ENCODE measurements at regions of chr19 and their contacts with region 1.

Region 1: GRCh38 chr19:40777937-40778705 is at the start of gene RAB4B:
- DNase-seq: peak; percentile 100
- H3K4me3 Mint-ChIP-seq: peak within 1 kb of the TSS; percentile 99
- H3K27ac Mint-ChIP-seq: peak within 1 kb of the TSS; percentile 100
- H3K4me1 Mint-ChIP-seq: peaks cover 35% of the 10 kb centered on the region
- H3K27me3 Mint-ChIP-seq: no peaks in the 10 kb centered on the region

Region 2: DNA sequence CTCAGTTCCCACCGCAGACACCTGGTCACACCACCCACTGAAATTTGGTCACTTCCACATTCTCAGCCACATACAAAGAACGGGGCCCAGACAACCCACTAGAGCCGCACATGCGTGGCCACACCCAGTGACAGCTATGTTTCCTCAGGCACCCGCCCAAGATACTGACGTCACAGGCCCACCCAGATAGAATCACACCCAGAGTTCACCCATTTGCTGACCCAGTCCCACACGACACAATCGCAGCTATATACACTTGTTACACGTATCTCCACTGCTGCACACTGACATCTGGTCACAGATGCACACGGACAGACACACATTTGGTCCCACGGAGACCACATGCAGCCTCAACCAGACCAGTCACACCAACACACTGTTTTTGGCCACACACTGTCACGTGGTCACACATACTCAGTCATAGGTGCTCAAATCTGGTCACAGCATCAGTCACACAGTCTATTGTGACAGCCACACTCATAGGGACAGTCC is 90.5 kb before region 1 on chr19:
- CTCF ChIA-PET with region 1: no interaction called
- DNase-seq: no peak
- H3K4me3 Mint-ChIP-seq: no peak overlapping the region
- H3K27ac Mint-ChIP-seq: no peak overlapping the region
- H3K4me1 Mint-ChIP-seq: peaks cover 3% of the 10 kb centered on the region
- H3K27me3 Mint-ChIP-seq: no peaks in the 10 kb centered on the region

Region 3: DNA sequence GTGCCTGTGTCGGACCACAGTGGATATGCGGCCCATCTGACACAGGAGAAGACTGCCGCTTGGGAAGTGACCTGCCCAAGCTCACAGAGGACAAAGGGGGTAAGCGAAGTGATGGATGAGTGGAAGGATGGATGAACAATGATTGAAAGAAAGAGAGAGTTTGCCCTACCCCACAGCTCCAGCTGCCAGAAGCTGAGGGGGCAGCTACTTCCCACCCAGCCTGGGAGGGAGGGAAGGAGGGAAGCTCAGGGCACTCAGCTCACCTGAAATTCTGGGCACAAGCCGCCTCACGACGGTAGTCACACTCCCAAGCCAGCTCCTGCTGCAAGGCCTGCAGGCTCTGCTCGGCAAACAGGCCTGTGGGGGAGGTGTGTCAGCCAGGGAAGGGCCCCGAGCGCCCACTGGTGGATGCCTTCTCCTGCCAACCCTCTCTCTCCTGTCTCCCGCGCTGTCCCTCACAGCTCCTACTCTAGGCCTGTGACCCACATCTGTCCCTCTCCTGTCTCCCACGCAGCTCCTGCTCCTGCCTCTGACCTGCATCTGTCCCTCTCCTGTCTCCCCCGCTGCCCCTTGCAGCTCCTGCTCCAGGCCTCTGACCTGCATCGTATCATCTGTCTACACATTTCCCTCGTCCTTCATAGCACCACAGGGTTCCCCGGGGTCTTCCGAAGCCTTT is 75.6 kb before region 1 on chr19:
- CTCF ChIA-PET with region 1: no interaction called
- DNase-seq: no peak
- H3K4me3 Mint-ChIP-seq: no peak overlapping the region
- H3K27ac Mint-ChIP-seq: no peak overlapping the region
- H3K4me1 Mint-ChIP-seq: no peaks in the 10 kb centered on the region
- H3K27me3 Mint-ChIP-seq: no peaks in the 10 kb centered on the region

Region 4: DNA sequence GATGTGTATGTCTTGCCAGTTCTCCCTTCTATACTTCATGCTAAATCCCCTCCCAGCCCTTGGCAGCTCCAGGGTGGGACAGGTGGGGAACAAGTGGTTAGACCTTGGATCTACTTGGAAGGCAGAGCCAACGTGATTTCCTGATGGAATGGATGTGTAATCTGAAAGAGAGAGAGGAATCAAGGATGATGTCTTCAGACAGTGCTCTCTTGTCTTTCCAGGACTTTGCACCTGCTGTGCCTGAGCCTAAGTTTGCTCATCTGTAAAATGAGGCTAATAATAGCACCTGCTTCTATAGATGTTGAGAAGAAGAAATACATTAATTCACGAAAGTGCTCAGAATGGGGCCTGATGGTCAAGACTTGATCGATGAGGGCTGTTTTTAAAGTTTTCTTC is 13.9 kb after region 1 on chr19:
- CTCF ChIA-PET with region 1: interaction called, 24 read pairs
- DNase-seq: no peak
- H3K4me3 Mint-ChIP-seq: no peak overlapping the region
- H3K27ac Mint-ChIP-seq: no peak overlapping the region
- H3K4me1 Mint-ChIP-seq: peaks cover 10% of the 10 kb centered on the region
- H3K27me3 Mint-ChIP-seq: no peaks in the 10 kb centered on the region

Region 5: DNA sequence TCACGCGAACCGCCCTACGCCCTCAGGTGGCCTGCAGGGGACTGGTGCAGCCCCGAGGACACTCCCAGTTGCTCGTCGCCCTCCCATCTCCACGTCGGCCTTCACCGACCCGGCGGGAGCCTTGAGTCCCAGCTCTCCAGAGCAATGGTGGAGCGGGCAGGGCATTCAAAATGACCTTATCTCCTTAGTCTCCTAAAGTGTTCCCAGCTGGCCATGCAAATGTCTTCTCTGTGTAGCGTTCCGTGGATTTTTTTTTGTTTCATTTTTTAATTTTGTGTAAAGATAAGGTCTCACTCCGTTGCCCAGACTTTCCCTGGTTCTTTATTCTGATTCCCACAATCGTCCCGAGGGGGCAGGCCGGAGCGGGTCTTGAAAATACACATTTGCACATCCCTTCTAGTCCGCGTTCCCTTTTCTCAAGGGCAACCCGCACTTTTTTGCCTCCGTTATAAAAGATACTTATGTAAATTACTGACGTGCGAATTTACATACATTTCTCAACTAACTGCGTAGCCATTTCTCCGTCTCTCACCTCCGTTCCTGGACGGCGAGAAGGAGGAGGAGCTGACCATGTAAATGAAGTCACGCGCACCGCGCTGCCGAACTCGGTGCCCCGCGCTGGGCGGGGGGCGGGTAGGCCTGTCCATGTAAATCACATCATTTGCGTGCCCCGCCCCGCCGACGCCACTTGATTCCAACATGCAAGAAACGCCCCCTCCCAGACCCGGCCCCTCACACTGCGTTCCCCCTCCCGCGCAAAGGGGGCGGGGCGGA is 20.3 kb after region 1 on chr19:
- CTCF ChIA-PET with region 1: interaction called, 24 read pairs
- DNase-seq: peak; percentile 100
- H3K4me3 Mint-ChIP-seq: peak overlapping the region; percentile 84
- H3K27ac Mint-ChIP-seq: peak overlapping the region; percentile 98
- H3K4me1 Mint-ChIP-seq: peaks cover 47% of the 10 kb centered on the region
- H3K27me3 Mint-ChIP-seq: no peaks in the 10 kb centered on the region

Region 6: DNA sequence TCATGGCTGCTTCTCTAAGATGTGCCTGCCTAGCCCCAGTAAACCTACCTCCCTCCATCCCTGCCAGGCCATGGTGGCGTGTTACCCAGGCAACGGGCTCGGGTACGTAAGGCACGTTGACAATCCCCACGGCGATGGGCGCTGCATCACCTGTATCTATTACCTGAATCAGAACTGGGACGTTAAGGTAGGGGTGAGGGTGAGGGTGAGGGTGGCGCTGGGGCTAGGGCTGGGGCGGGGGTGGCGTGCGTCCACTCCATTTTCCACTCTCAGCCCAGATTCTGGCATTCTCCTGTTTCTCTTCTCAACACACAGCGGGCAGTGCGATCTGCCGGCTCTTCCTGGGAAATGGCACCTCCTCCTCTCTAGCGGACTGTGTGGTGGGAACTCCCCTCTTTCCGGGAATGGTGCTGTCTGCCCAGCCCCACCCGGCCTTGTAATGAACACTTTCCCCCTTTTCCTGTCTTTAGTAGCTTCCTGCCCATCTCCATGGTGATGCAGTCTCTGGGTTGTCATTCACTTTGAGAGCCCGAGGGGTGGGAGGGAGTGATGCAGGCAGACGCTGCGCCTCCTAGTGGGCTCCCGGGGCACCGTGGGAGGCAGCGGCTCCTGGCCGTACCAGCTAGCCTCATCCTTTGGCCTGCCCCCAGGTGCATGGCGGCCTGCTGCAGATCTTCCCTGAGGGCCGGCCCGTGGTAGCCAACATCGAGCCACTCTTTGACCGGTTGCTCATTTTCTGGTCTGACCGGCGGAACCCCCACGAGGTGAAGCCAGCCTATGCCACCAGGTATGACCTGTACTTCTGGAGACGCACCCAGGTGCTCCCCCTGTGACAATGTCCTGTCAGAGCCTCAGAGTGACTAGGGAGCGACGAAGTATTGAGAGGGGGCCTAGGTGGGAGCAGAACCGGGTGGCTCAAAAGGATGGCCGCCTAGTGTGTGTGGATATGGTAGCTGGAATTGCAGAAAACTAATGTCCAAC is 28.7 kb after region 1 on chr19:
- CTCF ChIA-PET with region 1: interaction called, 23 read pairs
- DNase-seq: peak; percentile 86
- H3K4me3 Mint-ChIP-seq: peak overlapping the region; percentile 81
- H3K27ac Mint-ChIP-seq: peak overlapping the region; percentile 96
- H3K4me1 Mint-ChIP-seq: peaks cover 95% of the 10 kb centered on the region
- H3K27me3 Mint-ChIP-seq: peaks cover 14% of the 10 kb centered on the region